ENCODE measurements at regions of chr2 and their contacts with region 1.

Region 1: GRCh38 chr2:216498418-216499413 is at the start of gene RPL37A:
- DNase-seq: peak; percentile 94 to 96 (median 95)
- ATAC-seq: peak; percentile 96 to 98 (median 96)
- H3K4me3 ChIP-seq: peak within 1 kb of the TSS; percentile 59 to 96 (median 79)
- H3K27ac ChIP-seq: peak within 1 kb of the TSS; percentile 53 to 96 (median 82)
- H3K4me1 ChIP-seq: peaks cover 4 to 79% (median 23%) of the 10 kb centered on the region in 12 donors
- H3K27me3 ChIP-seq: no peaks in the 10 kb centered on the region
- CTCF ChIP-seq: no peak
- POLR2A ChIP-seq: peak; percentile 48 to 93
- total RNA-seq, gene RPL37A: 602 to 2,166 (median 1,938) TPM

Region 2: DNA sequence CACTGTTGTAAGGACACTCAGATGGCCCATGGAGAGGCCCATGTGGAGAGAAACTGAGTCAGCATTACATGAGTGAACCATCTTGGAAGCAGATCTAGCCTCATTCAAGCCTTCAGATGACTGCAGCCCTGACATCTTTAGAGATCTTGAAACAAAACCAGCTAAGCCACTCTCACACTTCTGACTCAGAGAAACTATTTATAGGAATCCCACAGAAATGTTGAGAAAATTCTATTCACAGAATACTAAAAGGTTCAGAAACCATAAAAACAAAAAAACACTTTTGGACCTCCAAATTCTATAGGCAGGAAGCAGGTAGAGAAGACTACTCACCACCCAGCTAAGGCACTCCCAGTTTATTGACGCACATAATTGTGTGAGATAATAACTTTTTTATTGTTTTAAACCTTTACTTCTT is 408.3 kb before region 1 on chr2:
- intact Hi-C with region 1: no loop called
- DNase-seq: no peak
- ATAC-seq: no peak
- H3K4me3 ChIP-seq: no peak overlapping the region
- H3K27ac ChIP-seq: no peak overlapping the region
- H3K4me1 ChIP-seq: no peaks in the 10 kb centered on the region
- H3K27me3 ChIP-seq: no peaks in the 10 kb centered on the region
- CTCF ChIP-seq: no peak
- POLR2A ChIP-seq: no peak

Region 3: GRCh38 chr2:216412022-216412999 is 86.4 kb before region 1 on chr2 and contains the start of gene SMARCAL1:
- intact Hi-C with region 1: loop called in 1 of 10 experiments (anchors 5 kb)
- DNase-seq: peak; percentile 99
- ATAC-seq: peak; percentile 94 to 97 (median 96)
- H3K4me3 ChIP-seq: peak within 1 kb of the TSS; percentile 40 to 97 (median 78)
- H3K27ac ChIP-seq: peak within 1 kb of the TSS; percentile 82 to 99 (median 96)
- H3K4me1 ChIP-seq: peaks cover 0 to 28% (median 9%) of the 10 kb centered on the region in 12 donors
- H3K27me3 ChIP-seq: peaks cover 0 to 5% (median 0%) of the 10 kb centered on the region in 9 donors
- CTCF ChIP-seq: peak in 1 of 12 donors; percentile 10
- POLR2A ChIP-seq: peak in 1 of 2 donors; percentile 44
- total RNA-seq, gene SMARCAL1: 5.5 to 17.1 (median 11.5) TPM

Region 4: DNA sequence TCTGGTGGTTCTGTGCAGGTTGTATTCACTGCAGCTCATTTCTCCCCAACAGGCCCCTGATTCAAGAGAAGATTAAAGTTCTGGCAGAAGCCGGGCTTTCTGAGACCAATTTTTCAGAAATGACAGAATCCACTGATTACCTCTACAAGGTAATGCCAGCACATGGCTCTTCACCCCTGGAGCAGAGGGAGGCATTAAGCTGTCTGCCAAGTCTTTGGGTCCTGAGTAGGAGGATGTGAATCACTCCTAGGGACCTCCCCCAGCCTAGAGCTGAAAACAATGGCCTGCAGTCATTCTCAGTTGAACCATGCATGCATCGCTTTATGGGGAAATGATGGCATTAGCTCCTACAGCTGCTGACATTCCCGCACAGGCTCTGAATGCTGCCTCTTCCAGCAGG is 20.6 kb before region 1 on chr2:
- intact Hi-C with region 1: no loop called
- DNase-seq: no peak
- ATAC-seq: peak in 1 of 4 donors; percentile 49
- H3K4me3 ChIP-seq: no peak overlapping the region
- H3K27ac ChIP-seq: no peak overlapping the region
- H3K4me1 ChIP-seq: peaks cover 0 to 33% (median 0%) of the 10 kb centered on the region in 12 donors
- H3K27me3 ChIP-seq: no peaks in the 10 kb centered on the region
- CTCF ChIP-seq: no peak
- POLR2A ChIP-seq: no peak